Panc1 (cell line): ENCODE measurements at regions of chr6 and their contacts with region 1.

Region 1: GRCh38 chr6:144284783-144285547 is at the start of gene UTRN:
- DNase-seq: no peak
- ATAC-seq: peak; percentile 86
- H3K4me3 ChIP-seq: peak within 1 kb of the TSS; percentile 91 to 94
- H3K27ac ChIP-seq: peak within 1 kb of the TSS; percentile 95
- H3K4me1 ChIP-seq: peaks cover 22% of the 10 kb centered on the region
- H3K27me3 ChIP-seq: no peaks in the 10 kb centered on the region
- CTCF ChIP-seq: no peak
- total RNA-seq, gene UTRN: 122 TPM

Region 2: GRCh38 chr6:144104898-144105487 is 180.0 kb before region 1 on chr6:
- CTCF ChIA-PET with region 1: no interaction called
- POLR2A ChIA-PET with region 1: no interaction called
- in situ Hi-C with region 1: no loop called
- intact Hi-C with region 1: loop called (anchors 10 kb)
- DNase-seq: peak; percentile 70
- ATAC-seq: peak; percentile 89
- H3K4me3 ChIP-seq: no peak overlapping the region
- H3K27ac ChIP-seq: no peak overlapping the region
- H3K4me1 ChIP-seq: no peaks in the 10 kb centered on the region
- H3K27me3 ChIP-seq: no peaks in the 10 kb centered on the region
- CTCF ChIP-seq: peak; percentile 72; the same call in 1 of the 2 replicates

Region 3: GRCh38 chr6:144215932-144216667 is 68.9 kb before region 1 on chr6:
- CTCF ChIA-PET with region 1: no interaction called
- POLR2A ChIA-PET with region 1: interaction called, 6 read pairs
- in situ Hi-C with region 1: no loop called
- intact Hi-C with region 1: loop called (anchors 2 kb)
- DNase-seq: peak; percentile 97
- ATAC-seq: peak; percentile 96
- H3K4me3 ChIP-seq: peak overlapping the region; percentile 69 to 84
- H3K27ac ChIP-seq: peak overlapping the region; percentile 84
- H3K4me1 ChIP-seq: peaks cover 14% of the 10 kb centered on the region
- H3K27me3 ChIP-seq: no peaks in the 10 kb centered on the region
- CTCF ChIP-seq: peak; percentile 95

Region 4: GRCh38 chr6:144265390-144265789 is 19.6 kb before region 1 on chr6:
- CTCF ChIA-PET with region 1: interaction called, 4 read pairs
- POLR2A ChIA-PET with region 1: interaction called, 27 read pairs
- in situ Hi-C with region 1: no loop called
- intact Hi-C with region 1: no loop called
- DNase-seq: peak; percentile 70
- ATAC-seq: peak; percentile 58
- H3K4me3 ChIP-seq: peak overlapping the region in 1 of 2 experiments; percentile 26; a peak in 2 of 4 replicates
- H3K27ac ChIP-seq: peak overlapping the region; percentile 92
- H3K4me1 ChIP-seq: peaks cover 38% of the 10 kb centered on the region
- H3K27me3 ChIP-seq: no peaks in the 10 kb centered on the region
- CTCF ChIP-seq: no peak

Region 5: GRCh38 chr6:144296973-144297372 is 12.0 kb after region 1 on chr6:
- CTCF ChIA-PET with region 1: no interaction called
- POLR2A ChIA-PET with region 1: interaction called, 19 read pairs
- in situ Hi-C with region 1: no loop called
- intact Hi-C with region 1: no loop called
- DNase-seq: no peak
- ATAC-seq: no peak; the same call in 1 of the 2 replicates
- H3K4me3 ChIP-seq: no peak overlapping the region
- H3K27ac ChIP-seq: peak overlapping the region; percentile 5; the same call in 1 of the 2 replicates
- H3K4me1 ChIP-seq: peaks cover 14% of the 10 kb centered on the region; the same call in 1 of the 2 replicates
- H3K27me3 ChIP-seq: no peaks in the 10 kb centered on the region
- CTCF ChIP-seq: no peak

Region 6: GRCh38 chr6:144482142-144482541 is 197.2 kb after region 1 on chr6:
- CTCF ChIA-PET with region 1: no interaction called
- POLR2A ChIA-PET with region 1: no interaction called
- in situ Hi-C with region 1: loop called (anchors 10 kb)
- intact Hi-C with region 1: loop called (anchors 5 kb)
- DNase-seq: peak; percentile 77
- ATAC-seq: peak; percentile 93
- H3K4me3 ChIP-seq: no peak overlapping the region
- H3K27ac ChIP-seq: no peak overlapping the region
- H3K4me1 ChIP-seq: no peaks in the 10 kb centered on the region
- H3K27me3 ChIP-seq: no peaks in the 10 kb centered on the region
- CTCF ChIP-seq: peak; percentile 78